WTC11 (cell line): ENCODE measurements at regions of chr2 and their contacts with region 1.

Region 1: DNA sequence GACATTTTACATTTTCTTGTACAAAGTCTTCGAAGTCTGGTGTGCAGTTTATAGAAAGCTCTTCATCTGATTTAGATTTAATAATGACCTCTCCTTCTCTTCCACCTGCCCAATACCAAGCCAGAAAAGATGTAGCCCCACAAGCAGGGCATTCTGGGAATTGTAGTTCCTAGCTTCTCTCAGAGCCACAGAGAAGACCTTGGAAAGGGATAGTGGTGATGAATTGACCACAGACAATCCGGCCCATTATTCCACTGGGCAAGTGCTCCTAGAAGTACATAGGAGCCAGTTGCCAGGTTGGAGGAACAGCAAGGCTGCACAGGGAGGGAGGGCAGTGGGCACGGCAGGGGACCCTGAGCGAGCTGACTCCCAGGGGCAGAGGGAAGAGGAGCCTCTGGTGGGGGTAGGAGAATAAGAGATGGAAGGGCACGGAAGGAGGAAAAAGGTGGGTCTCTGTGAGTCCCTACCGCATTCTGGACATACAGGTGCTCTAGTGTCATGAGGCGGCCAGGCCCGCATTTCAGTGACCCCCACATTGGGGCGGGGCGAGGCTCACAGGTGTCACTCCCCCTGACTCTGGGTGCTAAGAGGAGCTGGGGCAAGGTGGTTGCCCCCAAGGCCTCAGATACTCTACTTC is 152.5 kb upstream of the HAAO start:
- DNase-seq: no peak
- ATAC-seq: peak; percentile 63
- H3K4me3 Mint-ChIP-seq: no peak overlapping the region
- H3K27ac Mint-ChIP-seq: no peak overlapping the region
- H3K4me1 Mint-ChIP-seq: no peaks in the 10 kb centered on the region
- H3K27me3 Mint-ChIP-seq: no peaks in the 10 kb centered on the region
- CTCF ChIP-seq: no peak

Region 2: DNA sequence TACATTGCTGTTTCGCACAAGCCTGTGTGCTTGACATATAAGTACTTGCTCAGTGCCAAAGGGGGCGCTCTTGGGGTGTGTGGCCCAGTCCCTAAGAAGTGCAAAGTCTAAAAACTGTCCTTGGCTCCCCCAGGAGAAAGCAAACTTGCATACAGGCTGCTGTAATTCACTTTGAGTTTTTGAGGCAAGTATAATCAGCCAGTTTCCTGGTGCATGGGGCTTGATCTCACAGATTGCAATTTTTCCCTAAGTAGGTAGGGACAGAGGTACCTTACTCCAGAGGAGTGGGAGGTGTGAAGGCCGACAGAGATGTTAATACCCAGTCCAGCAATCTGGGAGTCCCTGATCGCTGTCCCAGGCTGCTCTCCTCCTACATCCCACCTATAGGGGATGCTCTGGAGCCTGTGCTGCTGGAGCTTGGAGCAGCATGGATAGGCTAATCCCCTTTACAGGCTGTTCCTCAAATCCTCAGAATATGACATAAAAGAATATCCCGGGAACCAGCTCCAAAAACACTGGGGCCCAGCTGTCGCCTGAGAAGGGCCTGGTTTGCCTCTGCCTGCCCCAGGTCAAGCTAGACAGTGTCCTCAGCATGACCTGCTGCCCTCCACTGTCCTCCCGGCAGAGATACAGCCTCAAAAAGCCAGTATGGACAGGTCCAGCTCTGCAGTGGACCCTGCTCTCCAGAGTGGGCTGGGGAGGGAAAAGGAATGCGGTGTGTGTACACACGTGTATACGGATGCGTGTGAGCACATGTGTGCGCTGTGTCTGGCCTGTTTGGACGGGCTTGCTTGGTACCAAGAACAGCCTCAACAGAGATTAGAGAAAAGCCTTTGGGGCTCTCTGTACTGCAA is 16.0 kb before region 1 on chr2:
- CTCF ChIA-PET with region 1: interaction called, 15 read pairs
- POLR2A ChIA-PET with region 1: no interaction called
- DNase-seq: peak; percentile 73
- ATAC-seq: peak; percentile 62
- H3K4me3 Mint-ChIP-seq: no peak overlapping the region
- H3K27ac Mint-ChIP-seq: peak overlapping the region; percentile 68; the same call in 1 of the 2 replicates
- H3K4me1 Mint-ChIP-seq: peaks cover 73% of the 10 kb centered on the region
- H3K27me3 Mint-ChIP-seq: no peaks in the 10 kb centered on the region; the same call in 1 of the 2 replicates
- CTCF ChIP-seq: peak; percentile 63

Region 3: GRCh38 chr2:42974721-42975717 is 30.1 kb after region 1 on chr2:
- CTCF ChIA-PET with region 1: interaction called, 12 read pairs
- POLR2A ChIA-PET with region 1: no interaction called
- DNase-seq: peak; percentile 89
- ATAC-seq: peak; percentile 91
- H3K4me3 Mint-ChIP-seq: peak overlapping the region; percentile 64
- H3K27ac Mint-ChIP-seq: no peak overlapping the region
- H3K4me1 Mint-ChIP-seq: peaks cover 11% of the 10 kb centered on the region
- H3K27me3 Mint-ChIP-seq: no peaks in the 10 kb centered on the region; the same call in 1 of the 2 replicates
- CTCF ChIP-seq: peak; percentile 60

Region 4: DNA sequence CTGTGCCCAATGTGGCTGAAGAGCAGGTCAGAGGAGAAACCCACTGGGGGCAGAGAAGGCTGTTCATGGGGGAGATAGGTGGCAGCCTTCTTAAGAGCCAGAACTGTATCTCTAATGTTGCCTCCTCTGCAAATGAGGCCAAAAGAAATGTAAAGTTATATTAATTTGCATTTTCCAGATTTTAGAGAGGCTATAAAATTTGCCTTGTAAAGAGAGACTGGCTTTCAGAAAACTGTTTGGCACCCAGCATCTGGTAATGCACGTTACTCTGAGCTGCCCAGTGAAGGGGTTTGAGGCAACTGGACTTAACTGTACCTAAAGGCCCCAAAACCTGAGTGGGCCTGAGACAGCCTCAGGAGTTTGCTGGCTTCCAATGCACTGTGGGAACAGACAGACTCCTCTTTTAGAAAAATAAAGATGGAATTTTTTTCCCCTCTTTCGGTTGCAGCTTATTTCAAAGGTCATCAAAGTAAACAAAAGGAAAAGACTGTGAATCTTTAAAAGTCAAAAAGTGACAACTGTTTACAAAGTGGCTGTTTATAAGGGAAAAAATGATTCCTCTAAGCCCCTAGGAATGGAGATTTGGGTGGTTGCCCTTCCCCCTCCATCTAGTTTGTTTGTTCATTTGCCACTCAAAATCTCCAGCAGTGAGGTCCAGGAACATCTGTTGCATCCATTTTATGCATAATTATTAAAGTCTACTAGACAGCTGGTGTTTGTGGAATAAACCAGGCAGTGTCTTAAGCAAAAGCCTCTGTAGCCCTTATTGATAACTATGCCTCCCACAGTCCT is 413.7 kb after region 1 on chr2:
- CTCF ChIA-PET with region 1: no interaction called
- POLR2A ChIA-PET with region 1: no interaction called
- DNase-seq: no peak
- ATAC-seq: no peak
- H3K4me3 Mint-ChIP-seq: no peak overlapping the region
- H3K27ac Mint-ChIP-seq: no peak overlapping the region; the same call in 1 of the 2 replicates
- H3K4me1 Mint-ChIP-seq: 0 out of 2 replicates have a peak, but pooled peaks cover 2% of the 10 kb centered on the region
- H3K27me3 Mint-ChIP-seq: no peaks in the 10 kb centered on the region
- CTCF ChIP-seq: no peak